ENCODE measurements at regions of chr6 and their contacts with region 1.

Region 1: DNA sequence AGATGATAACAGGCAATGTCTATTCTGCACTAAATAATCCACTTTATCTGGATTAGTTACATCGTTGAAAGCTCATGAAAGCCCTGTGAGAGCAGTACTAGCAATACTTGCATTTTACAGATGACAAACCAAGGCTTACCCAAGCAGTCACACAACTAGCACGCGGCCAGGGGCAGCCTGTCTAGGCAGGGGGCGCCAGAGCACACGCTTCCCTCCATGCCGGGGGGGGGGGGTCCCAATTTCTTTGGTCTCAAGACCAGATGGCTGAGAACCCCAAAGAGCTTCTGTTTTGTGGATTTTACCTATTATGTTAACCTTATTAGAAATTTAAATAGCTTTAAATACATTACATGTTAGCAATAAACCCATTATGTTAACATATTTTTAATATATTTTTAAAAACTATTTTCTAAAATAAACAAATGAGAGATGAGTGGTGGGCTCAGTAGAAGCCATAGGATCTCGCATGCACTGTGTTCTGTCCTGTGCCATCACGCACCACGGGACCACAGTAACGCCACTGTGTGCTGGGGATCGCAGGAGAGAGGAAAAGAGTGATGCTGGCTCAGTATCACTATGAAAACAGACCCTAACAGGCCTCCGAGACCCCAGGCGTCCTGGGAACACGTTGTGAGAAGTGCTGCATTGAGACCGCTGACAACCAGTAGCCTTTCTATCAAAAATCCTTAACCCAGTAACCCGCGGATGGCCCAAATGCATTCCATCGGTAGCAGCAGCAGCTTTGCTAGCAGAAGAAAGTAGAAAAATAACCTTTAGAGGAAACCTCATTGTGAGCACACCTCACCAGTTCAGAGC is 5.3 kb upstream of the PRR18 start:
- DNase-seq: no peak
- H3K4me3 Mint-ChIP-seq: no peak overlapping the region
- H3K27ac Mint-ChIP-seq: no peak overlapping the region
- H3K4me1 Mint-ChIP-seq: no peaks in the 10 kb centered on the region
- H3K27me3 Mint-ChIP-seq: peaks cover 23% of the 10 kb centered on the region

Region 2: GRCh38 chr6:166258854-166259276 is 54.6 kb before region 1 on chr6:
- intact Hi-C with region 1: no loop called
- DNase-seq: no peak
- H3K4me3 Mint-ChIP-seq: no peak overlapping the region
- H3K27ac Mint-ChIP-seq: no peak overlapping the region
- H3K4me1 Mint-ChIP-seq: peaks cover 22% of the 10 kb centered on the region
- H3K27me3 Mint-ChIP-seq: peaks cover 35% of the 10 kb centered on the region

Region 3: DNA sequence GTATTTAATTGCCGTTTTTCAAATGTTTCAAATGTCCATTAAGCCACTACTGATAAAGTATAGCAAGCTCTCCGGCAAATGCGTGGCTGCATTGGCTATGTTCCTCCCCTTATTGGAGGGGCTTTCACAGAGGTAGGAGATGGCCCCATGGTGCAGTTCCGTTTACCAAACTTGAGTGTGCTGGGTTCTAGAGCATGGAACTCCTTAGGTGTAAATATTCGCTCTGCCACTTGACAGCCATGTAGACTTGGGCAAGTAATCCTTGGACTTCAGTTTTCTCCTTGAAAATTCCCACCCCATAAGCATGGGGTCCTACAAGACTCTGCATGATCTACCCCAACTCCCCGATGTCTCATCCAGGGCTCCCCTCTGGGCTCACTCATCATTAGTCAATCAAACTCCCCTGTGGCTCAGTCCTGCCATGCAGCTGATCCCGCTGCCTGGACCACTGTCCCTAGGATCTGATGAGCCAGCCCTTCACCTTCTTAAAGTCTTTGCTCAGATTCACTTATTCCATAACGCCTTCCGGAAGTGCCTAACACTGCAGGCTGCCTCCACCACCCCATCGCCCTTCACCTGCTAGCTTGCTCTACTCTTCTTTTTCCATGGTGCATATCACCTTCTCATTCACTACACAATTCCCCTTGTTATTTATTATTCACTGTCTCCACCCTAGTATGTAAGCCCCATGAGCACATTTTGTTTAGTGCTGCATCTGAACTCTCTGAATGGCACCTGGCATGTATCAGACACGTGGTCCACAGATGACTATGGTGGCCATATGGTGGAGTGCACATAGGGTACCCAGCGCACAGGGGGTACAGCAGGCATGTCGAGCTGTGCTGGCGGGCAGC is 24.0 kb before region 1 on chr6:
- intact Hi-C with region 1: no loop called
- DNase-seq: no peak
- H3K4me3 Mint-ChIP-seq: no peak overlapping the region
- H3K27ac Mint-ChIP-seq: no peak overlapping the region
- H3K4me1 Mint-ChIP-seq: no peaks in the 10 kb centered on the region
- H3K27me3 Mint-ChIP-seq: peaks cover 12% of the 10 kb centered on the region

Region 4: GRCh38 chr6:166325383-166326042 is 12.1 kb after region 1 on chr6:
- intact Hi-C with region 1: loop called (anchors 1 kb)
- DNase-seq: no peak
- H3K4me3 Mint-ChIP-seq: no peak overlapping the region
- H3K27ac Mint-ChIP-seq: no peak overlapping the region
- H3K4me1 Mint-ChIP-seq: no peaks in the 10 kb centered on the region
- H3K27me3 Mint-ChIP-seq: no peaks in the 10 kb centered on the region

Region 5: DNA sequence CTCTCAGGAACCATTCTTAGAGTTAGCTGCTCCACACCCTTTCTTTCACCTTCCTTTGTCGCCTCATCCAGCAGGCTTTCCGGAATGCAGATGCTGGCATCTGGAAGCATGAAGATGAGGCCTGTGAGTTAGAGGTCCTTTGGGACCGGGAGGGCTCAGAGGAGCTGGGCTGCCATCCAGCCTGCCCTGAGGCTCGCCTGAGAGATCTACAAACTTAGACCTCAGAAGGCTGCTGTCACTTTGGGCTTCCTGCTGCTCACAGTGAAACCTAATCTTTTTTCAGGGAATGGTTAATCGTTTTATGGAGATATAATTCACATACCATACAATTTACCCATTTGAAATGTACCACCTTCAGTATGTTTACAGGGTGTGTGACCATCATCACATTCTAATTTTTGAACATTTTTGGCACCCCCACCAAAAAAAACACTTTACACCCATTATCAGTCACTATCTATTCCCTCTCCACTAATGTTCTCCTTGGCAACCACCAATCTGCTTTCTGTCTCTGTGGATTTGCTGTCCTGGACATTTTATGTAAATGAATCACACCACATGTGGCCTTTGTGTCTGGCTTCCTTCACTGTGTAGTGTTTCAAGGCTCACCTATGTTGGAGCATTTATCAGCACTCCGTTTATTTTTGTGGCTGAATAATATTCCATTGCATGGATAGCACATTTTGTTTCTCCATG is 89.3 kb after region 1 on chr6:
- intact Hi-C with region 1: loop called (anchors 1 kb)
- DNase-seq: no peak
- H3K4me3 Mint-ChIP-seq: no peak overlapping the region
- H3K27ac Mint-ChIP-seq: no peak overlapping the region
- H3K4me1 Mint-ChIP-seq: peaks cover 5% of the 10 kb centered on the region
- H3K27me3 Mint-ChIP-seq: peaks cover 10% of the 10 kb centered on the region